Activated B cell treated with CpG ODN at 0.5 μM for 24 hours (primary cell): ENCODE measurements at regions of chr3 and their contacts with region 1.

Region 1: DNA sequence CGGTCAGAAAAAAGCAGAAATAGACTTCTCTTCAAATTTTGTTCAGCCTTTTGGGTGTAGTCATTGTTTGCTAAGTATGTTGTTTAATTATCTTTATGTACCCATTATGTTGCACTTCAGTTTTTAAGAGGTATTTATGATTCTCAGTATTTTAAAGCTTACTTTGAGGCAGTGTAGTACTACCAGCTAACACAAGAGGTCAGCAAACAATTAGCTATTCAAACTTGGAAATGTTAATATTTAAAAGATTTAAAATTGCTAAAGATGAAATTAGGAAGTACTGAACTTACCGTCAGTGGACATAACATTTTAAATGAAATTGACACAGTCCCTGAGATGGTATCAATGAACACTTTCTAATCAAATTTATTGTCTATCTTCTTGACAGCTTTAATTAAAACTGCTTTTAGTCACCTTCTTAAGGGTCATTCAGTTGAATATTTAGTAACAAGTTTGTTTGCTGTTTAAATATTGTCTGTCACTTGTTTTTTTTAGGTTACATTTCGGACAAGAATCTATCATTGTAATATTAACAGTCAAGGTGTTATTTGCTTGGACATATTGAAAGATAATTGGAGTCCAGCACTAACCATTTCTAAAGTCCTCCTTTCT is 28.1 kb downstream of the NKIRAS1 start:
- DNase-seq: no peak
- ATAC-seq: peak; percentile 42
- H3K4me3 Mint-ChIP-seq: no peak overlapping the region
- H3K27ac Mint-ChIP-seq: no peak overlapping the region
- H3K4me1 Mint-ChIP-seq: peaks cover 8% of the 10 kb centered on the region
- H3K27me3 Mint-ChIP-seq: no peaks in the 10 kb centered on the region
- CTCF ChIP-seq: peak; percentile 78

Region 2: DNA sequence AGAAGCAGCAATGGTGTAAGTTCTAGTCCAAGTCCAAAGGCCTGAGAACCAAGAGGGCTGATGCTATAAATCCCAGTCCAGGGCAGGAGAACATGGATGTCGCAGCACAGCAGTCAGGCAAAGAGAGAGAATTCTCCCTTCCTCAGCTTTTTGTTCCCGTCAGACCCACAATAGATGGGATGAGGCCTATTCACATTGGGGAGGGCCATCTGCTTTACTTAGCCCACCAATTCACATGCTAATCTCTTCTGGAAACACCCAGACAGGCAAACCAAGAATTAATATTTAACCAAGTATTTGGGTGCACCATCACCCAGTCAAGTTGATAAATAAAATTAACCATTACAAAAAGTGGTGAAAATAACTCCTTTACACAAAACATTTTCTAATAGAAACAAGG is 1197.3 kb before region 1 on chr3:
- CTCF ChIA-PET with region 1: no interaction called
- POLR2A ChIA-PET with region 1: no interaction called
- intact Hi-C with region 1: no loop called
- DNase-seq: no peak
- ATAC-seq: no peak
- H3K4me3 Mint-ChIP-seq: no peak overlapping the region
- H3K27ac Mint-ChIP-seq: no peak overlapping the region
- H3K4me1 Mint-ChIP-seq: no peaks in the 10 kb centered on the region
- H3K27me3 Mint-ChIP-seq: no peaks in the 10 kb centered on the region
- CTCF ChIP-seq: no peak

Region 3: GRCh38 chr3:23909358-23909757 is 20.6 kb after region 1 on chr3:
- CTCF ChIA-PET with region 1: no interaction called
- POLR2A ChIA-PET with region 1: no interaction called
- intact Hi-C with region 1: no loop called
- DNase-seq: no peak
- ATAC-seq: no peak
- H3K4me3 Mint-ChIP-seq: no peak overlapping the region
- H3K27ac Mint-ChIP-seq: no peak overlapping the region
- H3K4me1 Mint-ChIP-seq: no peaks in the 10 kb centered on the region
- H3K27me3 Mint-ChIP-seq: no peaks in the 10 kb centered on the region
- CTCF ChIP-seq: no peak

Region 4: GRCh38 chr3:23945903-23946751 is 57.4 kb after region 1 on chr3:
- CTCF ChIA-PET with region 1: no interaction called
- POLR2A ChIA-PET with region 1: interaction called, 5 read pairs
- intact Hi-C with region 1: loop called (anchors 2 kb)
- DNase-seq: peak; percentile 97
- ATAC-seq: peak; percentile 79
- H3K4me3 Mint-ChIP-seq: peak overlapping the region; percentile 86
- H3K27ac Mint-ChIP-seq: peak overlapping the region; percentile 94
- H3K4me1 Mint-ChIP-seq: peaks cover 44% of the 10 kb centered on the region
- H3K27me3 Mint-ChIP-seq: no peaks in the 10 kb centered on the region
- CTCF ChIP-seq: no peak

Region 5: DNA sequence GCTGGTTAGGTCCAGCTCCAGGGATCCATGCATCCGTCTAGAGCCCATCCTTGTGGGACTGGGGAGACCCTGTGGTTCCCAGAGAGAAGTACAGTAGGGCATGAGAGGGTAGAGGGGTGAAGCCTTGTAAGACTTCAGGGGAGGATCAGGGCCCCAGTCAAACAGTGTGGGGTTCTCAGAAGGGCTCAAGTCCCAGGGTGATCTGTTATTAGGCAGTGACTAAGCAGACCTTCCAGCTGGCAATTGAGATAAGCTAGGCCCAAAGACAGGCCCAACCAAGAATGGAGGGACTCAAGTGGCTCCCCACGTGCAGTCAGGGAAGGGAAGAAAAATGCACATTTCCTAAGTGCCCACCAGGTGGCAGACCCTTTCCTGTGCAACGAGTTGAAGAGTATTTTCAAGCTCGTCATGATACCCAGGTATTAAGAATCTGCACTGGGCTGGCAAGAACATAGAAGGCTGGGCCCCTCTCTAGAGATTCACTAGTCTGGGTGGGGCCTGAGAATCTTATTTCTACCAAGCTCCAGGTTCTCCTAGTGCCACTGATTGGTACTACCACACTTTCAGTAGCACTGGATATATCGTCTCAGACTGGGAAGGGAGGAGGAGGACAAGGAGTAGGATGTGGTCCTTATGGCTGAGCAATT is 297.1 kb after region 1 on chr3:
- CTCF ChIA-PET with region 1: interaction called, 14 read pairs
- POLR2A ChIA-PET with region 1: no interaction called
- intact Hi-C with region 1: loop called (anchors 2 kb)
- DNase-seq: no peak
- ATAC-seq: peak; percentile 62
- H3K4me3 Mint-ChIP-seq: no peak overlapping the region
- H3K27ac Mint-ChIP-seq: no peak overlapping the region
- H3K4me1 Mint-ChIP-seq: no peaks in the 10 kb centered on the region
- H3K27me3 Mint-ChIP-seq: no peaks in the 10 kb centered on the region
- CTCF ChIP-seq: no peak

Region 6: GRCh38 chr3:24237971-24238767 is 349.4 kb after region 1 on chr3:
- CTCF ChIA-PET with region 1: interaction called, 13 read pairs
- POLR2A ChIA-PET with region 1: no interaction called
- intact Hi-C with region 1: loop called (anchors 1 kb)
- DNase-seq: no peak
- ATAC-seq: peak; percentile 75
- H3K4me3 Mint-ChIP-seq: no peak overlapping the region
- H3K27ac Mint-ChIP-seq: no peak overlapping the region
- H3K4me1 Mint-ChIP-seq: no peaks in the 10 kb centered on the region
- H3K27me3 Mint-ChIP-seq: no peaks in the 10 kb centered on the region
- CTCF ChIP-seq: no peak

Region 7: DNA sequence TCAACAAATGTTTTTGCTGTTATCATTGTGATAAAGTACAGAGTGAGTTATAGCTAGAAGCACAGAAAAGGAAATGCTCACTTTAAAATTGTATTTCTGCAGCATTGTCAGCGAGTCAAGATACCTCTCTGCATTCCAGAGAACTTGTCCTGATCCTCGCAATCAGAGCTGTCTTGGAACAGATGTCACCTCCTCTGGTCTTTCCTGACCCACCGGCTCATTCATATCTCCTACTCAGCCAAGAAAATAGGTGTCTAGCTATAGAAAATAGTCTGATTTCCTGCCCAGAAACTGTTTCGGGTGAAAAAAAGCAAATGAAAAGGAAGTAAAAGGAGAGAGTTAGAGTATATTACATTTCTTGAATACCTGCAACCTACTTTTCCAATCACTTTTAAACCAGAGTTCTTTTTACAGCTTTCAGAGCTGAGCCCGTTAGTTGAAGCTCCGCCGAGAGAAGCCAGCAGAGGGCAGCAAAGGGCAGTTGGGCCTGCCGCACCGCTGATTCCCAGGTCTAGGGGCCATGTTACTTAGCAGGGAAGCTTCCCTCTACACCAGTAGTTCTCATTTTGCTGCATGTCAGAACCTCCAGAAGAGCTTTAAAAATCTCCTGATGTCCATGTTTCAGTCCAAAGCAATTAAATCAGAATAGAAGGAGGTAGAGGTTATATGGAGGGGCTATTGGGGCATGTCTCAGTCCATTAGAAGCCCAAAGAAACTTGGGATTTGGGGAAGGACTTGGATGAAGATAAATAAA is 791.7 kb after region 1 on chr3:
- CTCF ChIA-PET with region 1: interaction called, 3 read pairs
- POLR2A ChIA-PET with region 1: no interaction called
- intact Hi-C with region 1: loop called (anchors 5 kb)
- DNase-seq: peak; percentile 28
- ATAC-seq: no peak
- H3K4me3 Mint-ChIP-seq: no peak overlapping the region
- H3K27ac Mint-ChIP-seq: no peak overlapping the region
- H3K4me1 Mint-ChIP-seq: peaks cover 7% of the 10 kb centered on the region
- H3K27me3 Mint-ChIP-seq: no peaks in the 10 kb centered on the region
- CTCF ChIP-seq: peak; percentile 84